ENCODE measurements at regions of chr6 and their contacts with region 1.

Region 1: GRCh38 chr6:13538084-13538483 is 36.3 kb upstream of the SIRT5 start:
- DNase-seq: peak; percentile 55
- ATAC-seq: peak; percentile 73
- H3K4me3 ChIP-seq: no peak overlapping the region
- H3K27ac ChIP-seq: no peak overlapping the region
- H3K4me1 ChIP-seq: no peaks in the 10 kb centered on the region
- H3K27me3 ChIP-seq: peaks cover 0 to 12% of the 10 kb centered on the region in 2 experiments
- CTCF ChIP-seq: peak; percentile 53
- EP300 ChIP-seq: no peak
- POLR2A ChIP-seq: no peak
- RAD21 ChIP-seq: peak; percentile 69

Region 2: DNA sequence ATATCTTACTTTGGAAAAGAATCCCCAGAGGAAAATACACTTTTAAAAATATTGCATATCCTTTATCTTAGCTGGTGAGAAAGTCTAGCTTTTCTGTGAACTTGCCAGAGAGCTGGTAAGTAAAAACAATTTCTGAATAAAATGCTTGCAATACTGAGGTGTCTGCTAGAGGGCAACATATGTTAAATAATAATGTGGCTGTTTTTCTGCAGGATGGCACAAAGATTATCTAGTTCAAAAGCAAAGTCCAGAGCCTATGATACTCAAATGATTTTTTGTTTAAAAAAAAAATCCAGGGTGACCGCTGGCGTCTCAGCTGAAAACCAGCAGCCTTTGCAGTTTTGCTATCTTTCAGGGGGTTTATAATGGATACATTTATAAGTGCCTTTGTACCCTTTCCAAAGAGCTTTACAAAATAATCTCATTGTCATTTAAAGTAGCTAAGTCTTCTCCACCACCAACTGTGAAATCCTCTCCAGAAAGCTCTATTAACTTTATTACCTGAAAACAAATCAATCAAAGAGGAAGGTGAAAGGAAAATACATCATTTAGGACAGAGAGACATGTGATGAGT is 626.6 kb before region 1 on chr6:
- CTCF ChIA-PET with region 1: no interaction called
- POLR2A ChIA-PET with region 1: no interaction called
- in situ Hi-C with region 1: loop called (anchors 25 kb)
- intact Hi-C with region 1: no loop called
- DNase-seq: peak; percentile 18
- ATAC-seq: no peak
- H3K4me3 ChIP-seq: no peak overlapping the region
- H3K27ac ChIP-seq: no peak overlapping the region
- H3K4me1 ChIP-seq: no peaks in the 10 kb centered on the region
- H3K27me3 ChIP-seq: peaks cover 0 to 16% of the 10 kb centered on the region in 2 experiments; a peak in 1 of 5 replicates
- CTCF ChIP-seq: peak; percentile 46
- EP300 ChIP-seq: no peak
- POLR2A ChIP-seq: no peak
- RAD21 ChIP-seq: peak; percentile 24; the same call in 1 of the 2 replicates

Region 3: DNA sequence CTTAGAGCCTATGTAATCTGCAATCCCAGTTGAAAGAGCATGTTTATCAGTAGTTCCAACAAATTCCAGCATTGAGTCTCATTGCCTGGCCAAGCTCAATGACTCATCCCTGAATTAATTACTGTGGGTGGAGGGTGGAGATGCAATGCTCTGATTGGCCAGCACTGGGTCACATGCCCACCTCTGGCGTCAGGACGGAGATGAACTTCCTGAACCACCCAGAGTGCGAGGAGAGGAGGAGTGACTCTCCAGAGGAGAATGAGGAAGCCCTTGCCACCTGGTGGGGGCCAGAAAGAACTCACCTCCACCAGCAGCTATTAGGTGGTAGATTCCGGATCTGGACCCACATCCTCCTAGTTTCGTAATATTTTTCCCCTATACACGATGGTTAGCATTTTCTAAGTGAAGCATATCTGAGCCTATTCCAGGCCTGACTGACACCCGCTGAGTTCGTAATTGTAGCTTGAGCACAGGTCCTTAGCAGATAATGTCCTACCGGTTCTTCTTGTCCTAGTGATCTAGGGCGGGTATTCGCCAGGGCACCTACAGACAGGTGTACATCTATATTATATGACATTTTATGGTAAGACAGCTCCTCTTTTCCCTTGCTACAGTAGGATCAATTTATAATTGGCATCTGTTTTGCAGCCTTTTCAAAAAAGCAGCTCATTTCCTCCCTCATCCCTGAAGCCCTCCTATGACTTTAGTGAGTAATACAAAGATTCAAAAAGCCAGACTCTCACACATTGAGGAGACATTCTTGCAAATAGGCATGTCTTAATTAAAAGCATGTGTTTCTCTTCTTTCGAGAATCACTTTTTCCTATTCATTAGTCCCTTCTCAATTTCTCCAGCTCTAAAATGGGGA is 493.5 kb before region 1 on chr6:
- CTCF ChIA-PET with region 1: no interaction called
- POLR2A ChIA-PET with region 1: no interaction called
- in situ Hi-C with region 1: no loop called
- intact Hi-C with region 1: no loop called
- DNase-seq: peak; percentile 5
- ATAC-seq: no peak; the same call in 2 of the 3 replicates
- H3K4me3 ChIP-seq: no peak overlapping the region
- H3K27ac ChIP-seq: no peak overlapping the region
- H3K4me1 ChIP-seq: no peaks in the 10 kb centered on the region
- H3K27me3 ChIP-seq: no peaks in the 10 kb centered on the region
- CTCF ChIP-seq: no peak
- EP300 ChIP-seq: no peak
- POLR2A ChIP-seq: no peak
- RAD21 ChIP-seq: no peak

Region 4: GRCh38 chr6:13194852-13195251 is 343.2 kb before region 1 on chr6:
- CTCF ChIA-PET with region 1: no interaction called
- POLR2A ChIA-PET with region 1: no interaction called
- in situ Hi-C with region 1: loop called (anchors 25 kb)
- intact Hi-C with region 1: no loop called
- DNase-seq: peak; percentile 64
- ATAC-seq: peak; percentile 87
- H3K4me3 ChIP-seq: no peak overlapping the region
- H3K27ac ChIP-seq: no peak overlapping the region
- H3K4me1 ChIP-seq: peaks cover 2% of the 10 kb centered on the region; the same call in 1 of the 2 replicates
- H3K27me3 ChIP-seq: 0 out of 5 replicates have a peak, but pooled peaks cover 0 to 12% of the 10 kb centered on the region in 2 experiments
- CTCF ChIP-seq: peak; percentile 79
- EP300 ChIP-seq: no peak
- POLR2A ChIP-seq: no peak
- RAD21 ChIP-seq: peak; percentile 63

Region 5: GRCh38 chr6:13261464-13261994 is 276.6 kb before region 1 on chr6:
- CTCF ChIA-PET with region 1: no interaction called
- POLR2A ChIA-PET with region 1: no interaction called
- in situ Hi-C with region 1: no loop called
- intact Hi-C with region 1: no loop called
- DNase-seq: no peak
- ATAC-seq: no peak
- H3K4me3 ChIP-seq: no peak overlapping the region
- H3K27ac ChIP-seq: no peak overlapping the region
- H3K4me1 ChIP-seq: peaks cover 6% of the 10 kb centered on the region
- H3K27me3 ChIP-seq: no peaks in the 10 kb centered on the region
- CTCF ChIP-seq: no peak
- EP300 ChIP-seq: no peak
- POLR2A ChIP-seq: no peak
- RAD21 ChIP-seq: no peak

Region 6: GRCh38 chr6:13548500-13549210 is 10.6 kb after region 1 on chr6:
- CTCF ChIA-PET with region 1: no interaction called
- POLR2A ChIA-PET with region 1: no interaction called
- in situ Hi-C with region 1: no loop called
- intact Hi-C with region 1: no loop called
- DNase-seq: peak; percentile 60
- ATAC-seq: peak; percentile 45
- H3K4me3 ChIP-seq: no peak overlapping the region
- H3K27ac ChIP-seq: no peak overlapping the region
- H3K4me1 ChIP-seq: peaks cover 19% of the 10 kb centered on the region
- H3K27me3 ChIP-seq: 0 out of 5 replicates have a peak, but pooled peaks cover 0 to 3% of the 10 kb centered on the region in 2 experiments
- CTCF ChIP-seq: no peak
- EP300 ChIP-seq: no peak
- POLR2A ChIP-seq: no peak
- RAD21 ChIP-seq: no peak